ENCODE measurements at regions of chr14 and their contacts with region 1.

Region 1: DNA sequence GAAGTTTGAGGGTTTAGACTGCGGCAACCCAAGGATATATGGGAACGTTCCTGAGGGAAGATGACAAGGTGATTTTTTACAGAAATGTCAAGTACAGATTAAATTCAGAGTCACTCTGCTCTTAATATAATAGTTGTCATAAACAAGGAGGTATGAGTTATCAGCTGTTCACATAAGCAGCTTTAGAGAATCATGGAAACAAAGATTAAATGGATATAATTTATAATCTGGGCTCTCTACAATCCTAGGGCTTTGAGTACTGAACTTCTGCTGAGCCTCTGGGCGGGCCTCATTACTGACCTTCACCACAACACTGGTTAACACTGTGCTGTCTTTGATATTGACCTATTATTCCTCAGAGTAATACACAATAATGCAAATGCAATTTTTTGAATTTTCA is 577.8 kb downstream of the RPS29 start:
- DNase-seq: no peak
- ATAC-seq: no peak

Region 2: GRCh38 chr14:49036984-49037516 is 28.7 kb after region 1 on chr14:
- intact Hi-C with region 1: loop called (anchors 1 kb)
- DNase-seq: no peak
- ATAC-seq: no peak